ENCODE measurements at regions of chr1 and their contacts with region 1.

Region 1: DNA sequence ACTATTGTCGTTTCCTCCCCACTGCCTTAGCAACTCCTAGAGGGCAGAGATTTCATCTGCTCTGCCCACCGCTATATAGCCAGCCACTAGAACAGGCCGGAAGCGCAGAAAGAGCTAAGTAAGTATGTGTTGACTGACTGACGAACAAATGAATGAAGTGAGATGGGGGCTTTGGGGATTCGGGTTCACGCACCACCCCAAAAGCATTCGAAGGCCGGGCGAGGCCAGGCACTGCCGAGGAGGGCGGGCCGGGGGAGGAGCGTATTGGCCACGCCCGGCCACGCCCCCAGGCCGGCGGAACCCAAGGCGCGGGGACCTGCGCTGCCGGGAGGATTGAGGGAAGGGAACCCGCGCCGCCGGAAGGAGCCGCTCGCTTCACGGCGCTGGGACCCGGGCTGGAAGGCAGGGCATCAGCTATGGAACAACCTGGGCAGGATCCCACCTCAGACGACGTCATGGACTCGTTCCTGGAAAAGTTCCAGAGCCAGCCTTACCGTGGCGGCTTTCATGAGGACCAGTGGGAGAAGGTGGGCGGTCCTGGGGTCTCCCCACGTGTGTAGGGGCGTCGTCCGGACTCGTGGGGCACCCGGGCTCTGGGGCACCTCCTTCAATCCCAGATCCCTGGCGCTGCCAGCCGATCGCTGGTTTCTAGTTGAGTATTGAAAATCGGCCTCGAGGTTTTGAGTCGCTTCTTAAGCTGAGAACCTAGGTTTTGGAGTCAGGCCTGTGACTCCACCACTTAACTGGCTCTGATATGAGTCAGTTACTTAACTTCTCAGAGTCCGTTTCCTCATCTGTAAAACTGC is at the start of gene TTC4:
- DNase-seq: peak; percentile 84
- H3K4me3 Mint-ChIP-seq: peak within 1 kb of the TSS; percentile 92
- H3K27ac Mint-ChIP-seq: peak within 1 kb of the TSS; percentile 92
- H3K4me1 Mint-ChIP-seq: peaks cover 31% of the 10 kb centered on the region
- H3K27me3 Mint-ChIP-seq: no peaks in the 10 kb centered on the region
- total RNA-seq, gene TTC4: 26.3 to 30.2 TPM

Region 2: GRCh38 chr1:53837924-53838652 is 877.6 kb before region 1 on chr1 and contains the start of gene NDC1:
- CTCF ChIA-PET with region 1: no interaction called
- intact Hi-C with region 1: loop called (anchors 1 kb)
- DNase-seq: peak; percentile 92
- H3K4me3 Mint-ChIP-seq: peak within 1 kb of the TSS; percentile 100
- H3K27ac Mint-ChIP-seq: peak within 1 kb of the TSS; percentile 96
- H3K4me1 Mint-ChIP-seq: peaks cover 27% of the 10 kb centered on the region
- H3K27me3 Mint-ChIP-seq: no peaks in the 10 kb centered on the region
- total RNA-seq, gene NDC1: 25.9 to 27.9 TPM

Region 3: DNA sequence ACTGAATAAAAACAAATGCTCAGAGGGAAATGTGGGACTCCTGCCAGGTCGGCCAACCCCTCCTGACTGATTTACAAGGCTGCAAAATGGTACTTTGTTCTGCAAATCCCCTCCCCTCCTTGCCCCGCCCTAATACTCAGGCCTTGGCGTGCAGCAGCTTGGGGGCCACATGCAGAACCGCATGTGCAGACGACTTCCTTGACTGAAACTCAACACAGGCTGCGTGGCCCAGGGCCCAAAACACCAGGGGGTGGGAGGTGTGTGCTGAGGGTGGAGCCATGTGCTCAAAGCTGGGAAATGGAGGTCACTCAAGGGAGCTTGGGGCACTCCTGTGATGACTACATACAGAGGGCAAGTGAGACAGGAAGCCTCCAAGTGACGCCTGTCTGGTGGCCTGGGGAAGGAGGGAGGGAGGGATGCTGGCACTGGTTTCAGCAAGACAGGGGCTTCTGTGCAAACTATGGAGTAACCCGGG is 428.5 kb before region 1 on chr1:
- CTCF ChIA-PET with region 1: no interaction called
- intact Hi-C with region 1: loop called (anchors 10 kb)
- DNase-seq: peak; percentile 92
- H3K4me3 Mint-ChIP-seq: peak overlapping the region; percentile 69
- H3K27ac Mint-ChIP-seq: peak overlapping the region; percentile 86
- H3K4me1 Mint-ChIP-seq: peaks cover 92% of the 10 kb centered on the region
- H3K27me3 Mint-ChIP-seq: no peaks in the 10 kb centered on the region

Region 4: DNA sequence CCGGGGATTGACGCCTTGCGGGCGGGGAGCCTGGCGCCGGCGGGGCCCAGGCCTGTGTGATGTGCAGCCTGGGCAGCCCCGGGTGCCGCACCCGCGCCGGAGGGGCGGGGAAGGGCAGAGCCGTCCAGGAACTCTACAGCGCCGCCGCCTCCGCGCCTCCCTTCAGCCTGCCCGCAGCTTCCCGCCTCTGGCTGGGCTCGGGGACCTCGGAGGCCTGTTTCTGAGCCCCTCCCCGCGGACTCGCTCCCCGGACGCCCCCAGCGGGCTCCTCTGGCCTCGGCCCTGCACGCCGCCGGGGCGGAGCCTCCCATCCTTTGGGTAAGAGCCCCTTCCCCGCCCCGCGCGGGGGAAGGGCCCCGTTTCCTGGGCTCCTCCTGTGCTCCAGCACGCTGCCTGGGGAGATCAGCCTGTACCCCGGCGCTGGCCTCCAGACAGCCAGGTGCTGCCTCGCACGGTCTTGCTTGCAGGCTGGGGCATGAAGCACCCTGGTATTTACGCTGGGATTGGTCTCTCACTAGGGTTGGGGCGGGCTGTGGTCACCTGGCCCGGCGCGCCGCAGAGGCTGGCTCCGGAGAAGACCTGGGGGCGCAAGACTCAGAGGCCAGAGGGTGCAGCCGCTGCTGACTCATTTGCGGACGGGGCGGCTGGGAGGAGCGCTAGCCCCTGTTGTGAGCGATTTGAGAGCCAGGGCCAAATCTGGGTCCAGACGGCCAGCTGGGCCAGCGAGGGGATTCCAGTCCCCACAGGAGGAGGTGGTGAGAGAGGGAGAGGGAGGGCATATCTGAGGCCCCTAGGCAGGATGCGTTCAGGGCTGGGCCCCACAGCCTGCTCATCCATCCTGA is 173.4 kb before region 1 on chr1:
- CTCF ChIA-PET with region 1: no interaction called
- intact Hi-C with region 1: loop called (anchors 1 kb)
- DNase-seq: peak; percentile 85
- H3K4me3 Mint-ChIP-seq: peak overlapping the region; percentile 70
- H3K27ac Mint-ChIP-seq: no peak overlapping the region
- H3K4me1 Mint-ChIP-seq: peaks cover 11% of the 10 kb centered on the region
- H3K27me3 Mint-ChIP-seq: no peaks in the 10 kb centered on the region

Region 5: GRCh38 chr1:54671985-54672608 is 43.6 kb before region 1 on chr1:
- CTCF ChIA-PET with region 1: no interaction called
- intact Hi-C with region 1: loop called (anchors 2 kb)
- DNase-seq: peak; percentile 84
- H3K4me3 Mint-ChIP-seq: no peak overlapping the region
- H3K27ac Mint-ChIP-seq: no peak overlapping the region
- H3K4me1 Mint-ChIP-seq: no peaks in the 10 kb centered on the region
- H3K27me3 Mint-ChIP-seq: no peaks in the 10 kb centered on the region

Region 6: DNA sequence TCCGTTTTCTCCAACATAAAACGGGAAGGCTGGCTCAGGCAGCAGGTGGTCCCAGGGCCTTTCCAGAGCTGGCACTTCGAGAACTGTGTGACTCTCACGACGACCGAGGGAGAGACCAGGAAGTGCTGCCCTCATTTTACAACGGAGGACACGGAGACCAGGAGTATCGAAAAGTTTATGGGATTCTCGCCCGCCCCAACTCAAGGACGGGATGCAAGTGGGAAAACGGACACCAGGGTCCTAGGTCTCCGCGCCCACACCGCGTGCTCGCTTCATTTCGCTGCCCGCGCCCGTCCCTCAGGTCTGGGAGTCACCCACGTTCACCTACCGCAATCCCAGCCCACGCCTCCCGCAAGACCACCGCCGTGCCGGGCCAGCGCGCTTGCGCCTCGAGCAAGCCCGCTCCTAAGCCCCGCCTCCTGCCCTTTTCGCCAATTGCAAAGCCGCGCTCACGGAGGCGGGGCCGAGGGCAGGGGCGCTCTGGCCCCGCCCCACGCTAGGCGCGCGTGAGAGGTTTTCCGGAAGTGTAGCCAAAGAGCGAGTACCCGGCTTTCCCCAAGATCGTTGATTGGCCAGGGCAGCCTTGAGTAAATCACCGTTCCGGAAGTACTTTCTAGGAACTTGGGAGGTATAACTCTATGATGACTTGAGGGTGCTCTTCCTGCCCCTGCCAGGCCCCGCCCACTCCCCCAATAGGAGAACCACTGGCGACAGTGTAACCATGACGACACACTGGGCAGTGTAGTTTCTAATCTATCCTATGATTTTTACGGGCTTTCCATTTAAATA is 48.6 kb after region 1 on chr1 and contains the start of gene PARS2:
- CTCF ChIA-PET with region 1: no interaction called
- intact Hi-C with region 1: loop called (anchors 1 kb)
- DNase-seq: peak; percentile 96
- H3K4me3 Mint-ChIP-seq: peak within 1 kb of the TSS; percentile 94
- H3K27ac Mint-ChIP-seq: peak within 1 kb of the TSS; percentile 83
- H3K4me1 Mint-ChIP-seq: peaks cover 19% of the 10 kb centered on the region
- H3K27me3 Mint-ChIP-seq: no peaks in the 10 kb centered on the region
- total RNA-seq, gene PARS2: 3.0 to 3.1 TPM

Region 7: GRCh38 chr1:54886724-54887664 is 171.3 kb after region 1 on chr1 and contains the start of gene DHCR24:
- CTCF ChIA-PET with region 1: no interaction called
- intact Hi-C with region 1: loop called (anchors 1 kb)
- DNase-seq: peak; percentile 75
- H3K4me3 Mint-ChIP-seq: peak within 1 kb of the TSS; percentile 93
- H3K27ac Mint-ChIP-seq: peak within 1 kb of the TSS; percentile 80
- H3K4me1 Mint-ChIP-seq: peaks cover 31% of the 10 kb centered on the region
- H3K27me3 Mint-ChIP-seq: peaks cover 11% of the 10 kb centered on the region
- total RNA-seq, gene DHCR24: 56.3 to 64.8 TPM

Region 8: GRCh38 chr1:54955359-54955758 is 239.7 kb after region 1 on chr1:
- CTCF ChIA-PET with region 1: no interaction called
- intact Hi-C with region 1: no loop called
- DNase-seq: no peak
- H3K4me3 Mint-ChIP-seq: no peak overlapping the region
- H3K27ac Mint-ChIP-seq: no peak overlapping the region
- H3K4me1 Mint-ChIP-seq: no peaks in the 10 kb centered on the region
- H3K27me3 Mint-ChIP-seq: peaks cover 6% of the 10 kb centered on the region